Colonic mucosa (tissue), 4 donors: ENCODE measurements at regions of chr19 and their contacts with region 1.

Region 1: GRCh38 chr19:9674663-9675357 is at the start of gene ZNF562:
- DNase-seq: peak; percentile 91
- H3K4me3 ChIP-seq: peak within 1 kb of the TSS; percentile 91
- H3K27ac ChIP-seq: peak within 1 kb of the TSS; percentile 96
- H3K4me1 ChIP-seq: no peaks in the 10 kb centered on the region
- H3K27me3 ChIP-seq: no peaks in the 10 kb centered on the region
- CTCF ChIP-seq: no peak
- total RNA-seq, gene ZNF562: 34.7 to 37.2 TPM

Region 2: GRCh38 chr19:9768175-9769112 is 93.6 kb after region 1 on chr19 and contains the start of gene ZNF846:
- intact Hi-C with region 1: loop called (anchors 5 kb)
- DNase-seq: peak; percentile 96
- H3K4me3 ChIP-seq: peak within 1 kb of the TSS; percentile 83
- H3K27ac ChIP-seq: peak within 1 kb of the TSS; percentile 98
- H3K4me1 ChIP-seq: peaks cover 6% of the 10 kb centered on the region
- H3K27me3 ChIP-seq: no peaks in the 10 kb centered on the region
- CTCF ChIP-seq: no peak
- total RNA-seq, gene ZNF846: 9.2 to 10.5 TPM